ENCODE measurements at regions of chr17 and their contacts with region 1.

Region 1: DNA sequence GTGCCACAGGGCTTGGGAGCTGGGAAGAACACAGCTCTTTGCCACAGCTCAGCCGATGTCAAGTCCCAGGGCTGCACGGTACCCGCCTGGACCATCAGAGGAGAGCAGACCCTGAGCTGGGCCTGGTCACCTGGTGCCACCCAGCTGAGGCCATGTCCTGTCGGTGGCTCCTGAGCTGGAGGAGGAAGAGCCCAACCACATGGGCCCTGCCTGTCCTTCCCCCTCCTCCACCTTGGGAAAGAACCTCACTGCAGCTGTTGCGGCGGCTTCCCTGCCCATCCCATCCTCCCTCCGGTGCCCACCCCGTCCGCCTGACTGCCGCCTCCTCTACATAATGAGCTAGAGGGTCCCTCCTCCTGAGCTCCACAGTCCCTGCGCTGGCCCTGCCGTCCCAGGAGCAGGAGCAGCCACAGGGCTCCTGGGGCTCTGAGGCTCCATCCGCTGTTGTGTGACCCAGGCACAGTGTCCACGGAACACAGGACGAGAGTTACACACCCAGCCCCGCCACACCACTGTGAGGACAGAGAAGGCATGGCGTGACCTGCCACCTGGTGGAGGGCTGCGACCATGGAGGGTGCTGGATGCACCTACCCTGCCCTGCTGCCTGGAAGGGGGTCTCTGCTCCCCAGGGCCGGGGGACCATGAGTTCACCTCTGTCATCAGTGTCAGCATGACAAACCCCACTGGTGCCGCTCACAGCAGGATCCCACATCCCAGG is 21.4 kb upstream of the CHMP6 start:
- DNase-seq: peak in 7 of 9 experiments; percentile 18 to 68 (median 52)
- ATAC-seq: peak; percentile 70
- H3K4me3 ChIP-seq: no peak overlapping the region
- H3K4me3 Mint-ChIP-seq: no peak overlapping the region
- H3K27ac ChIP-seq: no peak overlapping the region
- H3K27ac Mint-ChIP-seq: no peak overlapping the region
- H3K4me1 ChIP-seq: peaks cover 19% of the 10 kb centered on the region
- H3K4me1 Mint-ChIP-seq: peaks cover 5% of the 10 kb centered on the region
- H3K27me3 ChIP-seq: no peaks in the 10 kb centered on the region
- H3K27me3 Mint-ChIP-seq: no peaks in the 10 kb centered on the region
- CTCF ChIP-seq: peak; percentile 26

Region 2: GRCh38 chr17:80919331-80920311 is 50.6 kb before region 1 on chr17:
- CTCF ChIA-PET with region 1: no interaction called
- POLR2A ChIA-PET with region 1: no interaction called
- intact Hi-C with region 1: loop called in 1 of 2 experiments (anchors 5 kb)
- DNase-seq: no peak
- ATAC-seq: no peak
- H3K4me3 ChIP-seq: no peak overlapping the region
- H3K4me3 Mint-ChIP-seq: no peak overlapping the region
- H3K27ac ChIP-seq: no peak overlapping the region
- H3K27ac Mint-ChIP-seq: no peak overlapping the region
- H3K4me1 ChIP-seq: no peaks in the 10 kb centered on the region
- H3K4me1 Mint-ChIP-seq: no peaks in the 10 kb centered on the region
- H3K27me3 ChIP-seq: no peaks in the 10 kb centered on the region
- H3K27me3 Mint-ChIP-seq: no peaks in the 10 kb centered on the region
- CTCF ChIP-seq: no peak

Region 3: DNA sequence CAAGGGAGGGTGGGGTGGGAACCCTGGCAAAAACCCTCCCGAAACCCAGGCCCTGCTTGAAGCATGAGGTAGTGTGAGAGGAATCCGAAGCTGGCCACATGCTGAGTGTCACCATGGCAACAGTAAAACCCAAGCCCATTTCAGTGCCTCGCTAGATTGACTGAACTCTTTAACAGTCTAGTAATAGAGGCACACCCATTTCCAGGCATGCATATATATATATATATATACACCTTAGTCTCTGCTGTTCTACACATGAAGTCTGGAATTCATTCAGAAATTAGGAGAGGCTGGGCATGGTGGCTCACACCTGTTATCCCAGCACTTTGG is 38.3 kb before region 1 on chr17:
- CTCF ChIA-PET with region 1: no interaction called
- POLR2A ChIA-PET with region 1: no interaction called
- intact Hi-C with region 1: no loop called
- DNase-seq: no peak
- ATAC-seq: no peak
- H3K4me3 ChIP-seq: no peak overlapping the region
- H3K4me3 Mint-ChIP-seq: no peak overlapping the region
- H3K27ac ChIP-seq: no peak overlapping the region
- H3K27ac Mint-ChIP-seq: no peak overlapping the region
- H3K4me1 ChIP-seq: no peaks in the 10 kb centered on the region
- H3K4me1 Mint-ChIP-seq: no peaks in the 10 kb centered on the region
- H3K27me3 ChIP-seq: no peaks in the 10 kb centered on the region
- H3K27me3 Mint-ChIP-seq: no peaks in the 10 kb centered on the region
- CTCF ChIP-seq: no peak

Region 4: DNA sequence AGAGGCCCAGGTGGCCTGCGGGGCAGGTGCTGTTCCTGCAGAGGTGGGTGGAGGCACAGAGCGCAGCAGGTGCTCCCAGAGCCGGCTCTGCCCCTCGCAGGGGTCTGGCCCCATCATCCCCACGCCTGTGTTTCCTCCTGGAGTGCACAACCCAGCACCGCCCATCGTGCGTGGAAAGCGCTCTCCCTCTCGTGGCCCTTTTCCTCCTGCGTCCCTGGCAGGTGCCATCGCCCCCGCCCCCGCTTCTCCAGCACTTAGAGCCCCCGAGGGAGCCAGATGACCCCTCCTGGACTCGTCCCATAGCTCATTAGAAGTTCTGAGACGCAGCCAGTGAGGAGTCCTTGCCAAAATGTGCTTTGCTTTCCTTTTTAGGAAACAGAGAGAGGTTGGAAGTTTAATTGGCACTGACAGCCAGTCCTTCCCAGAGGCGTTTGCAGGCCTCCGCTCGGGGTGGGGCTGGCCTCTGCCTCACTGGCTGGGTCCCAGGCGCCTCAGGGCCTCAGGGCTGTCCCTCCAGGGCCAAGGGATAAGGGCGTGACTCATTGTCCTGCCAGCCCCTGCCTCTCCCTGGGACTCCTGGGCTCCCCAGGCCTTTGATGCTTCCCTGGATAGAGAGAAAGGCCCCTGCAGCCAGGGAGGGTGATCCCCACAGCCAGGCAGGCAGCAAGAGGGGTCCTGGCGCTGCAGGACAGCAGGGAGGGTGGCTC is 10.7 kb before region 1 on chr17:
- CTCF ChIA-PET with region 1: no interaction called
- POLR2A ChIA-PET with region 1: no interaction called
- intact Hi-C with region 1: no loop called
- DNase-seq: no peak
- ATAC-seq: no peak
- H3K4me3 ChIP-seq: no peak overlapping the region
- H3K4me3 Mint-ChIP-seq: no peak overlapping the region
- H3K27ac ChIP-seq: no peak overlapping the region
- H3K27ac Mint-ChIP-seq: no peak overlapping the region
- H3K4me1 ChIP-seq: no peaks in the 10 kb centered on the region
- H3K4me1 Mint-ChIP-seq: no peaks in the 10 kb centered on the region
- H3K27me3 ChIP-seq: no peaks in the 10 kb centered on the region
- H3K27me3 Mint-ChIP-seq: no peaks in the 10 kb centered on the region
- CTCF ChIP-seq: no peak